Posterior cingulate gyrus (tissue), 11 donors: ENCODE measurements at regions of chr12 and their contacts with region 1.

Region 1: DNA sequence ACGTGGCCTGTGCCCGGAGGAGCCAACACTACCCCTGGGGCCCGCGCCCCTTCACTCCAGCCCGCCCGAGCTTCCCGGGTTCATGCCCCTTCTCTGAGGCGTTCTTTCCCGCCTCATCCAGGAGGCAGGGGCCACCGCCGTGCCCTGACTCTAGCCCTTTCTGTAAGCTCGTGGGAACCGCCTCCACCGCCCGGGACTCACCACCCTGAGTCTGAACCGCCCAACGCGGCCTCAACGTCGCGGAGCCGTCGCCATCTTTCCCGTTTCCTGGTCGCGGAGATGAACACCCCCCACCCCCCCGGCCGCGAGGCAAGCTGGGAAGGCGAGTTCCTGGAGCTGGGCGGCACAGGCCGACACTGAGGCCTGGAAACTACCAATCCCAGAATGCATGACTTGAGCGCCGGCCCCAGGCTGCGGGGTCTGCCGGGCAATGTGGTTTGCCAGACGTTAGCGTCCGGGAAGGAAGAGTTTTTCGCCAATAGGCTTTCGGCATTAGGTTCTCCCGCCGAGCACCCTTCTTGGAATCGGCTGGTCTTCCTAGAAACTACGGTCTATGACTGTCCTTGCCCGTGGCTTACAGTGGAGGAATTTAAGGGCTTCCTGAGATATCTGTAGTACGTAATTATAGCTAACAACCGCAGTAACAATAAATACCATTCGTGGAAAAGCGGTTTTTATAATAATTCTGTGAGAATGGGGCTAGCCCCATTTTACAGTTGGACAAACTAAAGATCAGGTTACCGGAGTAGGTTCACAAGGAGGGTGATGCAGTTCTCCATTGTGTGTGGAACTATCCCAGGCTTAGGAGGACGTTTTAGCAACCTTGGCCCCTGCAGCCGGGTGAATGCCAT is at the start of gene DDX23:
- DNase-seq: peak; percentile 86 to 99 (median 94)

Region 2: GRCh38 chr12:48580831-48581230 is 271.3 kb before region 1 on chr12:
- intact Hi-C with region 1: no loop called
- DNase-seq: no peak

Region 3: GRCh38 chr12:48865434-48866290 is 13.6 kb after region 1 on chr12 and contains the start of gene RND1:
- intact Hi-C with region 1: loop called (anchors 1 kb)
- DNase-seq: peak; percentile 84 to 98 (median 91)

Region 4: GRCh38 chr12:48890657-48891418 is 38.7 kb after region 1 on chr12:
- intact Hi-C with region 1: loop called (anchors 1 kb)
- DNase-seq: peak; percentile 78 to 97 (median 86)

Region 5: GRCh38 chr12:48903982-48904411 is 51.9 kb after region 1 on chr12:
- intact Hi-C with region 1: no loop called
- DNase-seq: peak; percentile 54 to 92 (median 77)

Region 6: GRCh38 chr12:48936379-48936979 is 84.4 kb after region 1 on chr12:
- intact Hi-C with region 1: loop called (anchors 2 kb)
- DNase-seq: peak; percentile 40 to 95 (median 78)